Mammary epithelial cell (primary cell): ENCODE measurements at regions of chr17 and their contacts with region 1.

Region 1: GRCh38 chr17:9971991-9972599 is 67.0 kb upstream of the RCVRN start:
- DNase-seq: no peak
- H3K4me3 ChIP-seq: no peak overlapping the region
- H3K27ac ChIP-seq: no peak overlapping the region
- H3K4me1 ChIP-seq: no peaks in the 10 kb centered on the region
- H3K27me3 ChIP-seq: no peaks in the 10 kb centered on the region
- CTCF ChIP-seq: no peak

Region 2: DNA sequence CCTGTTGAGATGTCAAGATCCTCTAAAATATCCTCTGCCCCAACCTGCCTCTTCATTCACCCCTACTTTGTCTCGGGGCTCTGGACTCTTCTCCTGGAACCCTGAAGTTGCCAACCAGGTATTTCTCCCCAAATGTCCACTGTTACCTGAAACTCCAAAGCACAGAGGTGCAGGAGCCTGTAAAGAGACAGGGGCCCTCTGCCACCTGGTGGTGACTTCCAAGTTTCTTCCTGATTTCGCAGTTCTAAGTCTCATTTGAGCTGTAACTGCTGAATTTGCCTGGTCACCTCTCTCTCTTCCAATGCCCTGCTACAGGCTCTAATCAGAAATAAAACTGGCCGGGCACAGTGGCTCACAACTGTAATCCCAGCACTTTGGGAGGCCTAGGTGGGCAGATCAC is 10.1 kb after region 1 on chr17:
- CTCF ChIA-PET with region 1: no interaction called
- dilution Hi-C with region 1: no loop called
- in situ Hi-C with region 1: no loop called
- intact Hi-C with region 1: no loop called
- DNase-seq: no peak
- H3K4me3 ChIP-seq: no peak overlapping the region
- H3K27ac ChIP-seq: no peak overlapping the region
- H3K4me1 ChIP-seq: no peaks in the 10 kb centered on the region
- H3K27me3 ChIP-seq: no peaks in the 10 kb centered on the region
- CTCF ChIP-seq: peak in 1 of 2 donors; percentile 12

Region 3: GRCh38 chr17:10013365-10014221 is 41.5 kb after region 1 on chr17:
- CTCF ChIA-PET with region 1: no interaction called
- dilution Hi-C with region 1: loop called (anchors 5 kb)
- in situ Hi-C with region 1: no loop called
- intact Hi-C with region 1: no loop called
- DNase-seq: no peak
- H3K4me3 ChIP-seq: no peak overlapping the region
- H3K27ac ChIP-seq: no peak overlapping the region
- H3K4me1 ChIP-seq: no peaks in the 10 kb centered on the region
- H3K27me3 ChIP-seq: no peaks in the 10 kb centered on the region
- CTCF ChIP-seq: no peak

Region 4: GRCh38 chr17:10226930-10227685 is 255.0 kb after region 1 on chr17:
- CTCF ChIA-PET with region 1: no interaction called
- dilution Hi-C with region 1: no loop called
- in situ Hi-C with region 1: loop called in 1 of 2 experiments (anchors 5 kb)
- intact Hi-C with region 1: no loop called
- DNase-seq: no peak
- H3K4me3 ChIP-seq: no peak overlapping the region
- H3K27ac ChIP-seq: no peak overlapping the region
- H3K4me1 ChIP-seq: no peaks in the 10 kb centered on the region
- H3K27me3 ChIP-seq: no peaks in the 10 kb centered on the region
- CTCF ChIP-seq: peak; percentile 39 to 65

Region 5: DNA sequence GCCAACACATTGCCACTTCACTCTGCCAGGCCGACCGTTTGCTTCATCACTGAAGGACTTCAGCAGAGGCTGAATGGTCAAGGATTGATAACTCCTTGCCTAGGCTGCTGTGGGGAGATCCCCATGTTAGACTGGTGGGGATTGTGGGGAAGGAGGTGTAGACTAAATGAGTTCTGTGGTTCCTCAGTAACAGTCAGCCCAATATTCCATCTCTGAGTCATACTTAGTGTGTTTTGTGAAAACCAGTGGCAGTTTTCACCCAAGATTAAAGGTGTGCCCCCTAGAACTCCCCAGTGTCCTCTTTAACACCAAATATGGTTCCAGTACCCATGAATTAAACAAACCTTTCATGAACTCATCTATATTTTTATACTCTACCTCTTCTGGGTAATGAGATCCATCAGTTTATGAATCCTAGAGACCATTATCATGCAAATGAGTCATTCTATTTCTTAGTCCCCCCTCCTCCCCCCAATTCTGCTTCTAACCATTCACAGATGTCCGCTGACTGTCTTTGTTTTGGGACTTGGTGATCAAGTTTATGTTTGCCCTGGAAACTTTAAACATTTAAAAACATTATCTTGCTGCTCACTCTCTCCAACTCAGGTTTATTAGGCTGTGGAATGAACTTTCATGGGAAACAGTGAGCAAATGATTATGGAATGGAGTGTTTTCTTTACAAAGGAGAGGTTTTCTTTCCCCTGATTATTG is 293.2 kb after region 1 on chr17:
- CTCF ChIA-PET with region 1: no interaction called
- dilution Hi-C with region 1: loop called (anchors 10 kb)
- in situ Hi-C with region 1: no loop called
- intact Hi-C with region 1: no loop called
- DNase-seq: no peak
- H3K4me3 ChIP-seq: no peak overlapping the region
- H3K27ac ChIP-seq: no peak overlapping the region
- H3K4me1 ChIP-seq: no peaks in the 10 kb centered on the region
- H3K27me3 ChIP-seq: no peaks in the 10 kb centered on the region
- CTCF ChIP-seq: no peak